Posterior vena cava (tissue), 2 donors: ENCODE measurements at regions of chr13 and their contacts with region 1.

Region 1: DNA sequence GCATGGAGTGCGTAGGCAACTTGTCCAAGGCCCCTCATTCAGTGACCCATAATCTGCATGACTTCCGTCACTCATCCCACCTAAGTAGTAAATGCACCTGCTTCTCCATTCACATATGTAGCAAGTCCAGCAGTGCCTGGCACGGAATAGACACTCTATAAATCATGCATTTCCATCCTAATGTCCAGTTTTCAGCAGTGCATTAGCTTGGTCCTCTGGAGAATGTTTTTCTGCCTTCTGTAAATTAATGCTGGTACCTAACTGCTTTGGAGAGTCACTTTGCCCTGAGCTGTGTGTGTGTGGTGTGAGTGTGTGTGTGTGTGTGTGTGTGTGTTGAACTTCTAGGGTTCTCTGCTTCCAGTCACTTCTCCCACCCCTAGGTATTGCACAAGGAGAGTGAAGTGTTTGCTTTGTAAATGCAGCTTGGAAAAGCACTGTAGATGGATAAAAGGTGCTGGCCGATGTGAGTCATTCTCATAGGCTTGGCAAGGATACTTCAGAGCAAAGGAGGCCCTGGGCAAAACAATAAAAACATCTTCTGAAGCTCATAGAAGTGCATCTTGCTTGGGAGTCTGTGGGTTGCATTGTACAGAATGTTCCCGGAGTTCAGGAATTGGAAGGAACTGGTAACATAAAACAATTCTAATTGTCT is 181.8 kb downstream of the KATNAL1 start:
- DNase-seq: no peak

Region 2: DNA sequence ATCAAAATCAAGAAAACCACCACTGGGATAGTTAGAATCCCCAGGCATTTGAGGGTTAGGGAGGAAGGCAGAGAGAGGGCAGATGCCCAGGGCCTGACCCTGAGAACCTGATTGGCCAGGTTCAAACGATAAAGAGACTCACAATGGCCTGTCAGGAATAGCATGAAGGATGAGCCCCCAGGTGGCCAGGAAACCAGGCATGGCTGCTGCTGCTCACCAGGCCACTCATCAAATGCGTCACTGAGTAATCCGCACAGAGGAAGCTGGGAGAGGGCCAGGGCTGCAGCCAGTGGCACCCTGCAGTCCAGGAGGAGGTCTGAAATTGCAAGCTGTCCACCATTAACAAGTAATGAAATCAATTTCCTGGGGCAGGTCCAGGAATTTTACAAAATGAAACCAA is 70.5 kb after region 1 on chr13:
- intact Hi-C with region 1: no loop called
- DNase-seq: no peak

Region 3: DNA sequence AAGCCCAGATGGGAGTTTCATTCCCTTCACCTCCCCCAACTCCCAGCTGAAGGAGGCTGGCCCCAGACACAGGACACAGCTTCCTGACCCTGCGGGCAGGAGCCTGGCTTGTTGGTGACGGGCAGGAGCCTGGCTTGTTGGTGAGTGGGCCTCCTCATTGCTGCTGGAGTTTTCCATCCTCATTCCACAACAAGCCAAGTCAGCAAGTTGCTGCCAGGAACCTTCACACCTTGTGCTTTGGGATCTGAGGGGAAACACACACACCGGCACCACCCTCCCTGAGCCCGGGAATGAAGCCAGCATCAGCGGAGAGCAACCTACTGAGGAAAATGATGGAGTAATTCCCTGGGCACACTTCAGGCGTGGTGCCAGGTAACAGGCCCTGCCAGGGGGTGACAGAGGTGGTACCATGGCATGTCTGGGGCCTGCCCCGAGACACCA is 684.7 kb after region 1 on chr13:
- intact Hi-C with region 1: loop called (anchors 5 to 10 kb)
- DNase-seq: no peak